ENCODE measurements at regions of chr17 and their contacts with region 1.

Region 1: GRCh38 chr17:29568331-29569244 is at the start of gene TP53I13:
- DNase-seq: peak; percentile 83
- ATAC-seq: peak; percentile 65
- H3K4me3 Mint-ChIP-seq: peak within 1 kb of the TSS; percentile 97
- H3K27ac Mint-ChIP-seq: peak within 1 kb of the TSS; percentile 97
- H3K4me1 Mint-ChIP-seq: peaks cover 32% of the 10 kb centered on the region
- H3K27me3 Mint-ChIP-seq: no peaks in the 10 kb centered on the region
- CTCF ChIP-seq: no peak
- total RNA-seq, gene TP53I13: 65.1 and 71.2 TPM in 2 replicates

Region 2: DNA sequence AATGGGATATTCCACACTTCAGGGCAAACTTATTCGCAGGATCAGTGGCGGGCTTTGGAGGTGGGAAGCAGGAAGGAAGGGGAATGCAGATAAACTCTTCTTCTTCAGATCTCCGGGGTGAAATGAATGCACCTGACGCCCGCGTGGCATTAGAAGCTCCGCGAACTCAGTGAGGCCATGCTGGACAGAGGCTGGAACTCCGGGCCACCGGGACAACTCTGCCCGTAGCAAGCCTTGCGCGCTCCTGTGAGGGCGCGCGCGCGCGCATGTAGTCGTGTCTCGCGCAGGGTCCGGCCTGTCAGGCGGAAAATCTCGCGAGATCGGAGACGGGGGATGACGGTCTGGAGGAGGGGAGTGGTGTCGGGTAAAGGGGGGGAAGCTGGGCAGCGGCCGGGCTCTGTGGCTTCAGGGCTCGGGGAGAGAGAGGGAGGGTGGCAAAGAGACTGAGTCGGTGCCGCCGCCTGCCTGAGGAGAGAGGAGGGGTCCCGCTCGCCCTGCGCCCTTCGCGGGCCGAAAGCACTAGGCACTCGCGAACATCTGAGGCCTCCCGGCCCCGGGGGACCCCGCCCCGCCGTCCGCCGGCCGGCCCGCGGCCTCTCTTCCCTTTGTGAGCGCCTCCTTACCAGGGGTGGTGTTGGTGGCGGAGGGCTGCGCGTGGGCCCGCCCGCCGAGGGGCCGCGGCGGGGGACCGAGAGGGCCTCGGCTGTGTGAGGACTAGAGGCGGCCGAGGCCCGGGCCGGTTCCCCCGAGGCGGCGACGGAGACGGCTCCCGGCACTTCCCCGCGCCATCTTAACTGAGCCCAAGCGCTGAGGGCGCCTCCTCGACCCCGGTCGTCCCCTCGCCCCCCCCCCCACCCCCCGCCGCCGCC is 178.4 kb before region 1 on chr17 and contains the start of gene TAOK1:
- CTCF ChIA-PET with region 1: no interaction called
- POLR2A ChIA-PET with region 1: interaction called, 7 read pairs
- intact Hi-C with region 1: loop called (anchors 1 kb)
- DNase-seq: peak; percentile 95
- ATAC-seq: peak; percentile 95
- H3K4me3 Mint-ChIP-seq: peak within 1 kb of the TSS; percentile 91
- H3K27ac Mint-ChIP-seq: peak within 1 kb of the TSS; percentile 93
- H3K4me1 Mint-ChIP-seq: peaks cover 41% of the 10 kb centered on the region
- H3K27me3 Mint-ChIP-seq: no peaks in the 10 kb centered on the region
- CTCF ChIP-seq: no peak
- total RNA-seq, gene TAOK1: 55.1 and 55.5 TPM in 2 replicates

Region 3: DNA sequence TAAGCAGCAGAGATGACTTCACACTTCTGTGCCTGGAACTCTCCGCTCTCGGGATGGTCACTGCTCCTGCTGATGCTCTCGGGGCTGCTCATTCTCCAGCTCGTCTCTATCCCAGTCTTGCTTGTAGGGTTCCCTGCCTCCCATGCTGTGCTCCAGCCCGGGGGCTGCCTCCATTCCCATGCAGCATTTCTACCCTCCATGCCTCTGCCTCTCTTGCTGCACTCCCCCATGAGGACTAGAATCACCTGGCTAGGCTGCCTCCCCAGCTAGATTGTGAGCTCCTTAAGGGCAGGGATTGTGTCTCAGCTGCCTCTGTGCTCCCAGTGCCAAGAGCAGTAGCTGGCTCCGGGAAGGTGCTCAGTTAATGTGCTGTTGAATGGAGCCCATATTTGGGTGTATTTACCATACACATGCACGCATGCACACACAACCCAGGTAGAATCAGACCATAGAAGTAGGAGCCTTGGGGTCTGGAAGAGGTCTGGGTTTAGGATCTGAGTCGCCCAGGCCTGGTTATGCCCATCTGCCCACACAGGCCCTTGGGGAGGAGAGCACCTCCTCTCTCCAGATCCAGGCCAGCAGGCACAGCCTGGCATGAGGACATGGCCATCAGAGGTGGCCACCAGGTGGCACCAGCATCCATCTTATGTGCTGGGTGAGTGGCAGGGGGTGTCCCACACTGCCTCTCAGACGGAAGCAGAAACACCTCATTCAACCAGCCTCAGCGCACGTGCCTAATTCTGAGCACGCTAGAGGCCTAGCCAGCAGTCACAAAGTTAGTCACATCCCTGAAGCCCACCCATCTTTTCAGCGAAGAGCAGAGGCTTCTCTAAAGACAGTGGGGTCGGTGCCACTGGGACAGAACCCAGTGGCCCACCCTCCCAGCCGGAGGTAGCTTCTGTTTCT is 11.5 kb after region 1 on chr17:
- CTCF ChIA-PET with region 1: interaction called, 11 read pairs
- POLR2A ChIA-PET with region 1: interaction called, 7 read pairs
- intact Hi-C with region 1: loop called (anchors 1 kb)
- DNase-seq: peak; percentile 82
- ATAC-seq: peak; percentile 98
- H3K4me3 Mint-ChIP-seq: no peak overlapping the region
- H3K27ac Mint-ChIP-seq: peak overlapping the region; percentile 71
- H3K4me1 Mint-ChIP-seq: peaks cover 27% of the 10 kb centered on the region
- H3K27me3 Mint-ChIP-seq: no peaks in the 10 kb centered on the region
- CTCF ChIP-seq: no peak

Region 4: DNA sequence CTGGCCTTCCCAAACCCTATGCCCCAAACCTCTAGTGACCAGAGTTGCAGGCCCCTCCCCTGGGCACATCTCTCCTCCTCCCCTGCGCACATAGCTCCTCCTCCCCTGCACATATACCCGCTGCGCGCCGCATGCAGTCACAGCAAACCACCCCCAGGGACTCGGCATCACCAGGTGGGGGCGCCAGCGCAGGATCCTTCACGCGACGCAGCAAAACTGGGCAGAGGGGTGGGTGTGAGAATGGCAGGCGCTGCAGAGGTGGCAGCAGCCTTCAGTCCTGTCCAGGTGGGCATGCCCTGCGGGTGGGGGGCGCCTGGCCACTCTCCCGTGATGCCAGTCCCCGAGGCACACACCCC is 48.5 kb after region 1 on chr17:
- CTCF ChIA-PET with region 1: interaction called, 57 read pairs
- POLR2A ChIA-PET with region 1: interaction called, 13 read pairs
- intact Hi-C with region 1: loop called (anchors 2 kb)
- DNase-seq: peak; percentile 75
- ATAC-seq: peak; percentile 79
- H3K4me3 Mint-ChIP-seq: peak overlapping the region; percentile 83
- H3K27ac Mint-ChIP-seq: peak overlapping the region; percentile 72
- H3K4me1 Mint-ChIP-seq: peaks cover 46% of the 10 kb centered on the region
- H3K27me3 Mint-ChIP-seq: peaks cover 3% of the 10 kb centered on the region
- CTCF ChIP-seq: no peak

Measured in activated B cell treated with CpG ODN at 0.5 μM for 24 hours (primary cell).